Left cardiac atrium (tissue), 4 donors: ENCODE measurements at regions of chr10 and their contacts with region 1.

Region 1: GRCh38 chr10:96138102-96138501 is 8.0 kb downstream of the ZNF518A start:
- DNase-seq: no peak
- ATAC-seq: no peak

Region 2: DNA sequence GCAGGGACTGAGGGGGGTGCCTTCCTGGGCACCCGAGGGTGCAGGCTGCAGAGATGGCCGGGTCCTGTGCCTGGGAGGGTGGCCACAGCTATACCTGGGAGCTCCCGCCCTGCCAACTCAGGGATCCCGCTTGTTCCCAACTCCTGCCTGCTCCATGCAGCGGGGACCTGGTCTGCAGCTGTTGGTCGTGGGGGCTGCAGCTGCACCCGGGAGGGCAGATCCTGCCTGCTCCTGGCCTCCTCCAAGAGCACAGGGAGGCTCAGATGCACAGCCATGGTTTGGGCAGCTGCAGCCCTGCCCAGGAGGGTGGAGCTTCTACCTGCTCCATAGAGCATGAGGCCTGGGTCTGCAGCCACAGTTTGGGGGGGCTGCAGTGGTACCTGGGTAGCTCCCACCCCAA is 431.1 kb before region 1 on chr10:
- intact Hi-C with region 1: no loop called
- DNase-seq: no peak
- ATAC-seq: no peak

Region 3: GRCh38 chr10:96043033-96043932 is 94.8 kb before region 1 on chr10 and contains the start of gene CCNJ:
- intact Hi-C with region 1: loop called in 1 of 2 experiments (anchors 5 kb)
- DNase-seq: peak; percentile 93
- ATAC-seq: peak; percentile 96 to 98
- total RNA-seq, gene CCNJ: 3.0 to 5.1 TPM